Activated T-helper 2 cell treated with anti-CD3 and anti-CD28 coated beads, Interferon-gamma antibody, Interleukin-2, Interleukin-4, amounts not matched to agents 10 μg/mL and 5 μg/mL and 100 μg/mL, durations not matched to agents 14 hours and 24 hours and 36 hours (primary cell): ENCODE measurements at regions of chr3 and their contacts with region 1.

Region 1: DNA sequence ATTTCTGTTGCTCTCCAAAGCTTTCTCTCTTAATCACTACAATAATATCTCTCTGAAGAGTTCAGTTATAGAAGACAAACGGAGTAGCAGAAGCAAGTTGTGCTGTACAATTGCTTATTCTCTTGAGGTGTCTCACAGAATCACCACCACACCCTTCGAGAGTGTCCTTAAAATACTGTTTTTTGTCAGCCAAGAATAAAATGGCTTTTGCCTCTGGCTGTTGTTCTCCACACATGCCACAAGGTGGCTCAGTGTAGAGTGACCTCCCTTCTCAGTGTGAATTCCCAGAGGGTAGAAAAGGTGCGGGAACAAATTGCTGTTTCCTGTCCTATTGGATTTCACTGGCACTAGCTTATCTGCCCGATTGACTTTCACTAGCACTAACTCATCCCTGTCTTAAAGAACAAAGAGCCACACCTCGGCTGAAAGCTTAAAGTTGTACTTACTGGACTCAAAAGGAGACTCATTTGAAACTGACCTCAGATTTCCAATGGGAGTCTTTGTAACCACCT is 134.2 kb upstream of the SATB1 start:
- DNase-seq: peak; percentile 26
- H3K4me3 Mint-ChIP-seq: peak overlapping the region; percentile 58
- H3K27ac Mint-ChIP-seq: peak overlapping the region; percentile 96
- H3K4me1 Mint-ChIP-seq: peaks cover 71% of the 10 kb centered on the region
- H3K27me3 Mint-ChIP-seq: no peaks in the 10 kb centered on the region

Region 2: GRCh38 chr3:17742108-17742879 is 817.1 kb before region 1 on chr3 and contains the start of gene TBC1D5:
- intact Hi-C with region 1: loop called (anchors 10 kb)
- DNase-seq: peak; percentile 93
- H3K4me3 Mint-ChIP-seq: peak within 1 kb of the TSS; percentile 93
- H3K27ac Mint-ChIP-seq: peak within 1 kb of the TSS; percentile 98
- H3K4me1 Mint-ChIP-seq: peaks cover 40% of the 10 kb centered on the region
- H3K27me3 Mint-ChIP-seq: no peaks in the 10 kb centered on the region
- total RNA-seq, gene TBC1D5: 40.2 and 43.9 TPM in 2 replicates

Region 3: DNA sequence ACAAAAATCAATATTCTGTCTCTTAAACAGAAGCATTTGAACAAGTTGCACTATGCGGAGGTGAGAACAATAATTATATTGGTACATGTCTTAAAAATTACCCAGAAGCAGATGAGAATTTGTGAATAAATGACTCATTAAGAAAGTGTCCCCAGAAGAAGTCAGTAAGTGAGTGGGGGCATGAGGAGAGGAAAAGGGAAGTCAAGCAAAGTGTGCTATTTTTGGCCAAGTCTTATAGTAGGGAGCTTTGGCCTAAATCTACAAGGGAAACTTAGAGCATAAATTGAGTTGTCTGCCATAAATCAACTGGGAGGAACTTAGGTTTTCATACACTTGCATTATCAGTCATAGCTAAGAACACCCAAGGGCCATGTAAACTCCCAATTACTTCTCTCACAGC is 47.4 kb before region 1 on chr3:
- intact Hi-C with region 1: loop called (anchors 5 kb)
- DNase-seq: no peak
- H3K4me3 Mint-ChIP-seq: no peak overlapping the region
- H3K27ac Mint-ChIP-seq: no peak overlapping the region
- H3K4me1 Mint-ChIP-seq: peaks cover 17% of the 10 kb centered on the region
- H3K27me3 Mint-ChIP-seq: no peaks in the 10 kb centered on the region

Region 4: DNA sequence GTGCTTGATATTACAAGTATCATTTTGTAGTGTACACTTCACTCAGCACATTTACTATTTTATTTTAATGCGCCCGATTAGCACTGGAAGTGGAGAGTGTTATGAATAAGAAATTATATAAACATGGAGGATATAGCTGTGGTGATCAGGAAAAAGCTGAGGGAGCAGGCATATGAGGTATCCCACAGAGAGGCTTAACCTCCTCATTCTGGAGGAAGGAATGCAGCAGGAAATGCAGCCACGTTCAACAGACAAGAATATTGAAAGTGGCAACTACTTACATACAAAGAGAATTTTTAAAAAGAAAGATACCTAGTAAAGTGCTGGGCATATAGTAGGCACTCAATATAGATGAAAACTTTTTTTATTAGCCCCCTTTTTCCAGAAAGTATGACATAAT is 31.7 kb after region 1 on chr3:
- intact Hi-C with region 1: no loop called
- DNase-seq: no peak
- H3K4me3 Mint-ChIP-seq: no peak overlapping the region
- H3K27ac Mint-ChIP-seq: no peak overlapping the region
- H3K4me1 Mint-ChIP-seq: peaks cover 2% of the 10 kb centered on the region
- H3K27me3 Mint-ChIP-seq: no peaks in the 10 kb centered on the region

Region 5: GRCh38 chr3:18657858-18658820 is 98.8 kb after region 1 on chr3:
- intact Hi-C with region 1: loop called (anchors 2 kb)
- DNase-seq: no peak
- H3K4me3 Mint-ChIP-seq: peak overlapping the region; percentile 15
- H3K27ac Mint-ChIP-seq: peak overlapping the region; percentile 71
- H3K4me1 Mint-ChIP-seq: peaks cover 70% of the 10 kb centered on the region
- H3K27me3 Mint-ChIP-seq: no peaks in the 10 kb centered on the region

Region 6: GRCh38 chr3:18740631-18741583 is 181.5 kb after region 1 on chr3:
- intact Hi-C with region 1: loop called (anchors 1 kb)
- DNase-seq: peak; percentile 61
- H3K4me3 Mint-ChIP-seq: peak overlapping the region; percentile 53
- H3K27ac Mint-ChIP-seq: peak overlapping the region; percentile 90
- H3K4me1 Mint-ChIP-seq: peaks cover 85% of the 10 kb centered on the region
- H3K27me3 Mint-ChIP-seq: no peaks in the 10 kb centered on the region

Region 7: DNA sequence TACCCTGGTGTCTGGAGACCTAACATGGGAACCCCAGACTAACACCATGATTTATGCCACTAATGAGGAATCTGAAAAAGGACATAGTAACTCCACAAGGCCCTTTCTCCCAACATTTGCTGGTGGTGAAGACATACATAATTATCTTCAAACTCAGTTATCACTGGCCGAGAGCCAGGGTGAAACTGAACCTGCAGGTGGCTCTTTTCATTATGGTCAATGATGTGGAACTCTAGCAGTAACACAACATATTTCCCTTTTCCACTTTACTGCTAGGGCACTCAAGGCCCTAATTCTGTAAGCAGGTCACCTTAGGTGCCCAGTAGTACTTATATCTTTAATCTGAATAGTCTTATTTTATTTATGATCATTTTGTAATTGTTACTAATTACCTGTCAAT is 192.1 kb after region 1 on chr3:
- intact Hi-C with region 1: no loop called
- DNase-seq: no peak
- H3K4me3 Mint-ChIP-seq: no peak overlapping the region
- H3K27ac Mint-ChIP-seq: no peak overlapping the region
- H3K4me1 Mint-ChIP-seq: peaks cover 72% of the 10 kb centered on the region
- H3K27me3 Mint-ChIP-seq: no peaks in the 10 kb centered on the region

Region 8: GRCh38 chr3:18988614-18989229 is 429.3 kb after region 1 on chr3:
- intact Hi-C with region 1: loop called (anchors 1 kb)
- DNase-seq: no peak
- H3K4me3 Mint-ChIP-seq: peak overlapping the region; percentile 82
- H3K27ac Mint-ChIP-seq: peak overlapping the region; percentile 92
- H3K4me1 Mint-ChIP-seq: peaks cover 34% of the 10 kb centered on the region
- H3K27me3 Mint-ChIP-seq: peaks cover 3% of the 10 kb centered on the region